ENCODE measurements at regions of chr14 and their contacts with region 1.

Region 1: GRCh38 chr14:31561155-31561846 is at the start of gene NUBPL:
- DNase-seq: peak; percentile 97 to 99 (median 99)
- ATAC-seq: peak; percentile 98 to 99
- H3K4me3 ChIP-seq: peak within 1 kb of the TSS; percentile 96
- H3K27ac ChIP-seq: peak within 1 kb of the TSS; percentile 98
- H3K4me1 ChIP-seq: no peaks in the 10 kb centered on the region
- H3K27me3 ChIP-seq: no peaks in the 10 kb centered on the region
- total RNA-seq, gene NUBPL: 19.1 to 23.9 (median 22.2) TPM

Region 2: DNA sequence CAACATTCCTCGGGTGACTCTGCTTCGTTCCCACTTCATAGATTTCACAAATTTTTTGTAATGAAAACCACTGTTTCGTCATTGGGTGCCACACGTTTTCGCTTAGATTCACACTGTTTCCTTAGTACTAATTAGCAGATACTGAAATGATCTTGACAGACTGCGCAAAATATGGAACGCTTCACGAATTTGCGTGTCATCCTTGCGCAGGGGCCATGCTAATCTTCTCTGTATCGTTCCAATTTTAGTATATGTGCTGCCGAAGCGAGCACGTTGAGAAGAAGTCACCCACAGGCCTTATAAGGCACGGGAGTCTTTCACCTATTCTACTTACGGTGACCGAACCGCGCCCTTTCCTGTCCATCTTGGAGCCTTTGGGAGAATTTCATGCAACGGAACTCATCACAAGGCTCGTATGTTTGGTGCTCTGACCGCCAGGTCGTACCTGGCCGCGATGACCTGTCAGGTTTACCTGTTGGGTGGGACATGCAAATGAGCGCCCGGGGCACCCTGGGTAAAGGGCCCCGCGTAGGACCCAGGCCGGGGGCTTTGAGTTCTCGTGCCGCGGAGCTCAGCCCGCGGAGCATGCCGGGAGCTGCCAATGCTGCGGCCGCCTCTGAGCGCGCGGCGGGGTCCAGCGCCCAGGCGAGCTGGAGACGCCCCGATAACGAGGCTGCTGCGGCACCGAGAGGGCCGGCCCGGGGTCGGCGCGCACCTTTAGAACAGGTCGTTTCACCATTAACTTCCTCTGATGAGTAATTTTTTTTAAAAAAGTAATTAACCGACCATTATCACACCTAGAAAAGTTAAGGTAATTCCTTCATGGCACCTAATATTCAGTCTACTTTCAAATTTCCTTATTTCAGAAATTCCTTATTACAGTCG is 641.9 kb after region 1 on chr14 and contains the start of gene RNU6-8:
- intact Hi-C with region 1: loop called in 1 of 4 experiments (anchors 10 kb)
- DNase-seq: peak; percentile 90 to 96 (median 96)
- ATAC-seq: peak; percentile 96 to 97
- H3K4me3 ChIP-seq: peak within 1 kb of the TSS; percentile 56
- H3K27ac ChIP-seq: peak within 1 kb of the TSS; percentile 92
- H3K4me1 ChIP-seq: no peaks in the 10 kb centered on the region
- H3K27me3 ChIP-seq: no peaks in the 10 kb centered on the region
- total RNA-seq, gene RNU6-8: not detected